Aorta (tissue), 5 donors: ENCODE measurements at regions of chr6 and their contacts with region 1.

Region 1: GRCh38 chr6:85404502-85405174 is 45.2 kb upstream of the NT5E start:
- DNase-seq: peak; percentile 79 to 92
- ATAC-seq: peak; percentile 44
- H3K4me3 ChIP-seq: no peak overlapping the region
- H3K27ac ChIP-seq: peak overlapping the region; percentile 63 to 77
- H3K4me1 ChIP-seq: peaks cover 3 to 8% of the 10 kb centered on the region in 2 donors
- H3K27me3 ChIP-seq: no peaks in the 10 kb centered on the region

Region 2: GRCh38 chr6:85360794-85361642 is 43.6 kb before region 1 on chr6:
- intact Hi-C with region 1: loop called (anchors 5 kb)
- DNase-seq: no peak
- ATAC-seq: peak; percentile 76
- H3K4me3 ChIP-seq: no peak overlapping the region
- H3K27ac ChIP-seq: peak overlapping the region; percentile 70 to 82
- H3K4me1 ChIP-seq: peaks cover 0 to 3% of the 10 kb centered on the region in 2 donors
- H3K27me3 ChIP-seq: no peaks in the 10 kb centered on the region

Region 3: DNA sequence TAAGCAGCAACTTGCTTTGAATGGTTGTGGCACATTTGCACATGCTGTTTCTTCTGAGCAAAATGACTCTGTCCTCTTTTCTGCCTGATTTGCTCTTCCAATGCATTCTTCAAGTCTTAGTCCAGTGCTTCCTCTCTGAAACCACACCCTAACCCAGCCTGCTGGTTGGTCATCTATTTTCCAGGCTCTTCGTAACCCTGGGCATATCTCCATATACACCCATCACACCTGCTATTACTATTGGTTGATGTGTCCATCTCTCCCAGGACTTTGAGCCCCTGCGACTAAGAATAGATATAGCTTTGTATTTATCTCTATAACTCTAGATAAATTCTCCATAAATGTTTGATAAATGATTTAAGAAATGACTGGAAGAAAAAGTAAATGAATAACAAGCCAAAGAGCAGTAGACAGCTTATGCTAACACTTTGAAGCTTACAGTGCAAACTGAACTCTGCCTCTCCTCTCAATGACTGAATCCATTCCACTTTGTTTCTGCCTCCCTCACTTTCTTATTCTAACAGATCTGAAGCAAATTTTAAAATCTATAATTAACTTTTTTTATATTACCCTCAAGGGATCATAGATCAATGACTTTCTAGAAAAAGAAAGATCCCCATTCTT is 14.4 kb before region 1 on chr6:
- intact Hi-C with region 1: no loop called
- DNase-seq: no peak
- ATAC-seq: no peak
- H3K4me3 ChIP-seq: no peak overlapping the region
- H3K27ac ChIP-seq: no peak overlapping the region
- H3K4me1 ChIP-seq: no peaks in the 10 kb centered on the region
- H3K27me3 ChIP-seq: no peaks in the 10 kb centered on the region

Region 4: GRCh38 chr6:85449818-85450759 is 45.5 kb after region 1 on chr6 and contains the start of gene NT5E:
- intact Hi-C with region 1: loop called in 1 of 2 experiments (anchors 5 kb)
- DNase-seq: peak; percentile 92 to 97
- ATAC-seq: peak; percentile 97
- H3K4me3 ChIP-seq: peak within 1 kb of the TSS; percentile 65 to 75
- H3K27ac ChIP-seq: peak within 1 kb of the TSS; percentile 84 to 88
- H3K4me1 ChIP-seq: peaks cover 3 to 9% of the 10 kb centered on the region in 2 donors
- H3K27me3 ChIP-seq: no peaks in the 10 kb centered on the region
- total RNA-seq, gene NT5E: 63.2 to 68.9 TPM

Region 5: DNA sequence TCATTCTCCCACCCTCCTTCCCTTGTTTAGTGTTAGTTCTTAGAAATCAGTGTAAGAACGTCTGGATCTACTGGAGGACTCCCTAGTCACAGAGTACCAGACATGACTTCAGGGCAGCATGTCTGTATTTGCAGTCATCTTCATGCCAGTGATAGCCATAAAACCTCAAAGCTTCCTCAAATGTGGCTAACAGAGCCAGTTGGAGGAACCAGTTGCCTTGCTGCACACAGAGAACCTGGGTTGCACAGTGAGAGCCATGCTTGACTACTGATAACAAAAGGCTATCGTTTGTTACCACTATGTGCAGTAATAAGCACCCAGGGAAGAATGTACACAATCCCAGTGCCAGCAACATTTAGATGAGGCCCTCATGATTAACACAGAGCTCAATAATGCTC is 65.4 kb after region 1 on chr6:
- intact Hi-C with region 1: loop called in 1 of 2 experiments (anchors 5 kb)
- DNase-seq: no peak
- ATAC-seq: no peak
- H3K4me3 ChIP-seq: no peak overlapping the region
- H3K27ac ChIP-seq: peak overlapping the region in 1 of 2 donors; percentile 4
- H3K4me1 ChIP-seq: peaks cover 2 to 3% of the 10 kb centered on the region in 2 donors
- H3K27me3 ChIP-seq: no peaks in the 10 kb centered on the region

Region 6: GRCh38 chr6:85482905-85483700 is 78.5 kb after region 1 on chr6:
- intact Hi-C with region 1: loop called in 1 of 2 experiments (anchors 5 kb)
- DNase-seq: peak; percentile 79 to 94
- ATAC-seq: peak; percentile 94
- H3K4me3 ChIP-seq: no peak overlapping the region
- H3K27ac ChIP-seq: peak overlapping the region in 1 of 2 donors; percentile 52
- H3K4me1 ChIP-seq: no peaks in the 10 kb centered on the region
- H3K27me3 ChIP-seq: no peaks in the 10 kb centered on the region